BJ (cell line): ENCODE measurements at regions of chr10 and their contacts with region 1.

Region 1: DNA sequence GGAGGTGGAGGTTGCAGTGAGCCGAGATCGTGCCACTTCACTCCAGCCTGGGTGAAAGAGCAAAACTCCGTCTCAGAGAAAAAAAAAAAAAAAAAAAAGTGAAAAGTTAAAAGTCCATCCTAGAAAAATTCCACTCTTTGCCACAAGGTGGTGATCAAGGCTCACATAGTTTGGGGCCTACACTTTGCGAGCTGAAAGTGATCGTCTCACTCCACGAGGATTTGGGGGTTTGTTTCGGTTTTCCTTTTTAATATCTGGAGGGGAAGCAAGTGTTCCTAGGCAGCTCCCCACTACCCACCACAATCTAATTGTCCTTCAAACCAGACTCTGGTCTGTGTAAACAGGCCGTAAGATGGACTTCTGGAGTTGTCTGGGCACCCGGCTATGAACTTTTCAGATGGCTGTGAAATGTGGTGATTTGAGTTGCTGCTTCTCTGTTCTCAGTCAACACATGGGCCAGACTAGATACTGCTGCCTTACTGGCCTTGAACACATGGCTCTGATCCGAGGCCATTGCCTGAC is 27.1 kb downstream of the PRLHR start:
- DNase-seq: no peak
- H3K4me3 ChIP-seq: no peak overlapping the region
- H3K27me3 ChIP-seq: peaks cover 6% of the 10 kb centered on the region
- CTCF ChIP-seq: peak; percentile 66

Region 2: DNA sequence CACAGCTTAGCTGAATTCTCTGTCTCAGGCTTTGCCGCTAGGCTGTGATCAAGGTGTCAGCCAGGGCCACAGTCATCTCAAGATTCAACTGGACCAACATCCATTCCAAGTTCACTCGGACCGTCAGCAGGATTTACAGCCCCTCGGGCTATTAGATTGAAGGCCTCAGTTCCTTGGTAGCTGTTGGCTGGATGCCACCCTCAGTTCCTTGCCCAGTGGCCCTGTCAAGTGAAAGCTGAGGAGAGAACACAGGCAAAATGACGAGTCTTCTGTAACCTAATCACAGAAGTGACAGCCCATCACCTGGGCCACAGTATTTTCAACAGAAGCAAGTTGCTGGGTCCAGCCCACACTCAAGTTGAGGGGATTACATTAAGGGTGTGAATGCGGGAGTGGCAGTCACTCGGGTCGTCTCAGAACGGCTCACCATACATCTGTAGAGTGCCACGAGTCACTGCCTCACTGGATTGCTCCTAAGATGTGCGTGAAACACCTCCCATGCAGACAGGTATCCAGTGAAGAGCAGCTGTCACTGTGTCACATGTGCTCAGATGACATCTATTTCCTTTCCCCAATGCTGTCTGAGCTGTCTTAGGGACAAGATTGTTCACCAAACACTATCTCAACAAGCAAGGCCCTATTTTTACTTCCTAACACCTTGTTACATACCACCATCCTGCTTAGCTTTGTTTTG is 106.0 kb after region 1 on chr10:
- CTCF ChIA-PET with region 1: no interaction called
- POLR2A ChIA-PET with region 1: no interaction called
- DNase-seq: no peak
- H3K4me3 ChIP-seq: no peak overlapping the region
- H3K27me3 ChIP-seq: no peaks in the 10 kb centered on the region
- CTCF ChIP-seq: no peak

Region 3: GRCh38 chr10:118720685-118721538 is 152.5 kb after region 1 on chr10:
- CTCF ChIA-PET with region 1: interaction called, 66 read pairs
- POLR2A ChIA-PET with region 1: no interaction called
- DNase-seq: no peak
- H3K4me3 ChIP-seq: no peak overlapping the region
- H3K27me3 ChIP-seq: no peaks in the 10 kb centered on the region
- CTCF ChIP-seq: peak; percentile 67

Region 4: DNA sequence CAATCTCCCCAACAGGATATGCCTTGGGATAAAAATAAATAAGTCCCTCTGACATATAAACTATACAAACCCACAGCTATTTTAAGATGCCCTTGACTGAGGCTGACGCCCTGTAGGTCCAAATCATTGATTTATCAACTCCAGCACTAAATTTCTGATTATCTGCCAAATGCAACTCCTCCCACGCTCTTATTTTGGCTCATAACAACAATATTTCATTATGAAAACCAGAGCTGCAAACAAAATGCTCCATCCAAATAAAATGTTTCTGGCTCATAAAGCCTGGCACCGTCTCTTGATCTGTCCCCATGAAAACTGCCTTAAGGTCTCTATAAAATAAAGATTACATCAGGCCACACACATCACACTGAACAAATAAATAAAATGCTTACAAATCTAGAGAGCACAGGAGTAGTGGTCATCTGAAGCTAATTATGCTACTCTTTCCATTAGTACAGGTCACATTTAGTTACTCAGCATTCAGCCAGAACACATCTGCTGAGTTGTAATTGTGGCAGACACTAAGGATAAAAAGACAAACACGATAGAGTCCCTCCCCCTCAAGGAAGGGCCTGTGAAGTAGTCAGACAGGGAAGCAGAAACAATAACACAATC is 157.6 kb after region 1 on chr10:
- CTCF ChIA-PET with region 1: interaction called, 66 read pairs
- POLR2A ChIA-PET with region 1: no interaction called
- DNase-seq: peak; percentile 58
- H3K4me3 ChIP-seq: no peak overlapping the region
- H3K27me3 ChIP-seq: no peaks in the 10 kb centered on the region
- CTCF ChIP-seq: no peak